Ascending aorta (tissue), 2 donors: ENCODE measurements at regions of chr4 and their contacts with region 1.

Region 1: GRCh38 chr4:75514131-75514948 is at the starts of genes RCHY1 and THAP6:
- DNase-seq: peak; percentile 79 to 98
- H3K4me3 ChIP-seq: peak within 1 kb of the TSS; percentile 85 to 90
- H3K27ac ChIP-seq: peak within 1 kb of the TSS; percentile 92 to 95
- H3K4me1 ChIP-seq: peaks cover 8 to 32% of the 10 kb centered on the region in 2 donors
- H3K27me3 ChIP-seq: no peaks in the 10 kb centered on the region
- CTCF ChIP-seq: no peak
- total RNA-seq, gene RCHY1: 16.2 TPM
- total RNA-seq, gene THAP6: 2.4 TPM

Region 2: GRCh38 chr4:74473155-74473811 is 1041.1 kb before region 1 on chr4:
- intact Hi-C with region 1: loop called (anchors 10 kb)
- DNase-seq: peak in 1 of 2 donors; percentile 67
- H3K4me3 ChIP-seq: no peak overlapping the region
- H3K27ac ChIP-seq: peak overlapping the region; percentile 66 to 68
- H3K4me1 ChIP-seq: peaks cover 0 to 15% of the 10 kb centered on the region in 2 donors
- H3K27me3 ChIP-seq: no peaks in the 10 kb centered on the region
- CTCF ChIP-seq: no peak

Region 3: GRCh38 chr4:74793757-74794340 is 720.5 kb before region 1 on chr4:
- intact Hi-C with region 1: loop called (anchors 5 kb)
- DNase-seq: peak in 1 of 2 donors; percentile 72
- H3K4me3 ChIP-seq: peak overlapping the region; percentile 72 to 84
- H3K27ac ChIP-seq: peak overlapping the region; percentile 88 to 96
- H3K4me1 ChIP-seq: peaks cover 0 to 10% of the 10 kb centered on the region in 2 donors
- H3K27me3 ChIP-seq: no peaks in the 10 kb centered on the region
- CTCF ChIP-seq: peak; percentile 7 to 70 (median 55)

Region 4: GRCh38 chr4:75490155-75490554 is 24.2 kb before region 1 on chr4:
- intact Hi-C with region 1: loop called (anchors 2 kb)
- DNase-seq: no peak
- H3K4me3 ChIP-seq: no peak overlapping the region
- H3K27ac ChIP-seq: peak overlapping the region in 1 of 2 donors; percentile 19
- H3K4me1 ChIP-seq: no peaks in the 10 kb centered on the region
- H3K27me3 ChIP-seq: no peaks in the 10 kb centered on the region
- CTCF ChIP-seq: peak in 1 of 3 experiments; percentile 52

Region 5: DNA sequence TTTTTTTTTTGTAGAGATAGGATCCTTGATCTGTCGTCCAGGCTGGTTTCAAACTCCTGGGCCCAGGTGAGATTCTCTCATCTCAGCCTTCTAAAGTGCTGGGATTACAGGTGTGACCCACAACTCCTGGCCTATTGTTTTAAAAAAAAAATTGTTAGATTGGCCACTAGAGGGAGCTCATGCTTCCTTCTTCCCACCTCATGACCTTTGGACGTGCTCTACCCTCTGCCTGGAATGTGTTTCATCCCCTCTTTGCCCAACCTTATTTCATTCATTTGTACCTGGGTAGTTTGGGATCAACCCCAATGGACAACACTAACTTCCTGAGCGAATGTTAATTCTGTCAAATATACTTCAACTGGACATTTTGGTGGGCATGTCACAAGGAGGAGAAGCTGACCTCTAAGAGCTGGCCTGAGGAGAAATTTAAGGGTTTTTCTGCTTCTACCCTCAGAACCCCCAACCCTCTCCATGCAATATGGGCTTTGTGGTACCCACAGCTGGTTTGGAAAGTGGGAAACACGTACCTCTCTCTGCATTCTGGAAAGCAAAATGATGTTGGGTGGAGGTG is 381.5 kb after region 1 on chr4:
- intact Hi-C with region 1: no loop called
- DNase-seq: no peak
- H3K4me3 ChIP-seq: no peak overlapping the region
- H3K27ac ChIP-seq: no peak overlapping the region
- H3K4me1 ChIP-seq: no peaks in the 10 kb centered on the region
- H3K27me3 ChIP-seq: no peaks in the 10 kb centered on the region
- CTCF ChIP-seq: peak in 2 of 3 experiments; percentile 38 to 57